ENCODE measurements at regions of chr3 and their contacts with region 1.

Region 1: DNA sequence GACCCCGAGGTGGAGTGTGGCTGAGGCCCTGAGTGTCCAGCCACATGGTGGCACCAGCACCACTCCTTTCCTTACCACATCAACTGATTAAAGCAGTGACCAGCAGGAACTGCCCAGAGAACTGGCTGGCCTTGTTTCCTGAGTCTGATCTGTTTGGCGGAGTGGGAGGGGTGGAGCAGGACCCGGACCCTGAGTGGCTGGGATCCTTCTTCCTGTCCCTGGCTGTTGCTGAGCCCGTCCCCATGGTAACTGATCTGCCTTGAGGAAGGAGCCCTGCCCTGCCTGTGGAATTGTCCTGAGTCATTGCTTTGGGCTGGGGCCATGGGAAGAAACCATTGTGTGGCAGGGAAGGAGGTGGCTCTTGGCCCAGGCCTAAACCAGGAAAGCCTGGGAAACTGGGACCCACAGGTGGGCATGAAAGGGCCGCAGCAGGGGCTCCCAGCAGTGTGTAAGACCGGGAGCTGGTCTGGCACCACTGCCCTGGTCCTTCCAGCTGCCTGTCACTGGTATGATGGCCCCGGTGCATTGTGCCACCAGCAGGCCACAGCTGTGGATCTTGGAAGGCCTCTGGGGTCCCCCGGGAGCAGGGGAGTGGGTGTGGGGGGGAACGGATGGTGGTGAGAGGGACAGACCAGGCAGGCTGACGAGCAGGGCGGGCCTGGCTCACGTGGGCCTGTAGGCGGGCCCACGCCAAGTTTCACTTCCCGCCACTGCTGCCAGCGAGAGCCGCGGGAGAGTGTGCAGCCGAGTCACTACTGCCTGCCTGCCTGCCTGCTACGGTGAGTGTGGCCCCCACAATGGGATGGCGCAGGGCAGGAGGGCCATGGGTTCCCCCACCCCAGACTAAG is 19.2 kb downstream of the ATRIP start:
- DNase-seq: peak; percentile 81 to 86
- ATAC-seq: peak; percentile 94 to 95 (median 95)
- H3K4me3 ChIP-seq: peak overlapping the region; percentile 72
- H3K4me3 Mint-ChIP-seq: peak overlapping the region; percentile 87
- H3K27ac ChIP-seq: peak overlapping the region; percentile 98
- H3K27ac Mint-ChIP-seq: peak overlapping the region; percentile 97 to 99
- H3K4me1 ChIP-seq: peaks cover 59% of the 10 kb centered on the region
- H3K4me1 Mint-ChIP-seq: peaks cover 36 to 51% of the 10 kb centered on the region in 2 donors
- H3K27me3 ChIP-seq: no peaks in the 10 kb centered on the region
- H3K27me3 Mint-ChIP-seq: no peaks in the 10 kb centered on the region
- CTCF ChIP-seq: no peak

Region 2: DNA sequence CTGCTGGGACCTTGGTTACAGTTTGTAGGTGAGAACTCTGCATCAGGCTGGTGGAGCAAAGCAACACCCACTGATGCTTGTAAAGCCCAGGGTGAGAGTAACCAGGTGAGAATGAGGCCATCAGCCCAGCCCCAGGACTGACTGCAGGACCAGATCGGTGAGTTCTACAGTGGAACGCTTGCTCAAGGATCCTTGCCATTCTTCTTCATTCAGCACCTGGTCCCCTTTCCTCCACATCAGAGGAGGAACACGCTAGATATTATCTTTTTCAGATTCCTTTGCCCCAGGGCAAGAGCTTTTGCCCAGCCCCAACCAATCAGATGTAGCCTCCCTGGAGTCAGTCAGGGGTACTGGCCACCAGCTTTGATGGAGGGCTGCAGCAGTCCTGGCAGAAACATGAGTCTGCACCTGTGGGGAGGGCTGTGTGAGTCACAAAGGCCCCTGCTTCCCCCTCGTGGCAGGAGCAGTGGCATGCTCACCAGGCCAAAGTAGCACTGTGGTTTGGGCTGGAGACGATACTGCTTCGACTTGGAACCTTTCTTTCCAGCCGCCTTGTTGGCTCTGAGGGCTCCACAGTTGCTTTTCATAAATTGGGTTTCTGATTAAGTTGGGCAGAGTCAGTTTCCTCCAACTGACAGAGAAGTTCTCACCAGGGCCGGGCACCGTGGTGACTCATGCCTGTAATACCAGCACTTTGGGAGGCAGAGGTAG is 41.8 kb after region 1 on chr3:
- intact Hi-C with region 1: loop called (anchors 5 kb)
- DNase-seq: peak; percentile 56 to 88
- ATAC-seq: peak; percentile 82 to 85 (median 84)
- H3K4me3 ChIP-seq: no peak overlapping the region
- H3K4me3 Mint-ChIP-seq: peak overlapping the region; percentile 35
- H3K27ac ChIP-seq: no peak overlapping the region
- H3K27ac Mint-ChIP-seq: peak overlapping the region in 1 of 2 donors; percentile 57
- H3K4me1 ChIP-seq: peaks cover 31% of the 10 kb centered on the region
- H3K4me1 Mint-ChIP-seq: peaks cover 8 to 23% of the 10 kb centered on the region in 2 donors
- H3K27me3 ChIP-seq: no peaks in the 10 kb centered on the region
- H3K27me3 Mint-ChIP-seq: no peaks in the 10 kb centered on the region
- CTCF ChIP-seq: peak; percentile 50

Region 3: GRCh38 chr3:48595526-48596121 is 129.9 kb after region 1 on chr3:
- intact Hi-C with region 1: no loop called
- DNase-seq: no peak
- ATAC-seq: peak in 1 of 3 donors; percentile 58
- H3K4me3 ChIP-seq: no peak overlapping the region
- H3K4me3 Mint-ChIP-seq: no peak overlapping the region
- H3K27ac ChIP-seq: no peak overlapping the region
- H3K27ac Mint-ChIP-seq: peak overlapping the region in 1 of 2 donors; percentile 35
- H3K4me1 ChIP-seq: no peaks in the 10 kb centered on the region
- H3K4me1 Mint-ChIP-seq: peaks cover 0 to 18% of the 10 kb centered on the region in 2 donors
- H3K27me3 ChIP-seq: peaks cover 2% of the 10 kb centered on the region
- H3K27me3 Mint-ChIP-seq: peaks cover 7 to 19% of the 10 kb centered on the region in 2 donors
- CTCF ChIP-seq: no peak